Ascending aorta (tissue), 2 donors: ENCODE measurements at regions of chr4 and their contacts with region 1.

Region 1: GRCh38 chr4:3724319-3725231 is 41.6 kb upstream of the ADRA2C start:
- DNase-seq: no peak
- H3K4me3 ChIP-seq: peak overlapping the region in 1 of 2 donors; percentile 26
- H3K27ac ChIP-seq: peak overlapping the region; percentile 74 to 86
- H3K4me1 ChIP-seq: peaks cover 9 to 49% of the 10 kb centered on the region in 2 donors
- H3K27me3 ChIP-seq: no peaks in the 10 kb centered on the region
- CTCF ChIP-seq: no peak

Region 2: DNA sequence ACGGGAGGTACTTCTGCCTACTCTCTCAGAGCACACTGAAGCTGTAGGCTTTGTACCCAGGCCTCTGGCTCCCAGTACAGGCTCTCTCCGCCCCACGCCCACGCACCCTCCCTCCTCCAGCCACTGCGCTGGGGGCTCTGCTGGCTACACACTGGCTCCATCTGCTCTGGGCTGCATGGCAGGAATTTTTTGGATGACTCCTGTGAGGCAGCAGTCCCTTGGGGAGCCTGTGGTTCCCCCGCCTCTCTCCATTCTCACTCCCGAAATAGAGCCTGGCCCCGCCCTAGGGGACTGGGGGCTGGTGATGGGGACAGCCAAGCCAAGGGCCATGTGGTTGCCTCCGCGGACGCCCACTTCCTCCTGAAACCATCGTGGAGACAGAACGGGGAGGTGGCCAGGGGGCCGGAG is 16.5 kb before region 1 on chr4:
- intact Hi-C with region 1: loop called (anchors 1 kb)
- DNase-seq: peak; percentile 61 to 94
- H3K4me3 ChIP-seq: peak overlapping the region; percentile 32 to 38
- H3K27ac ChIP-seq: peak overlapping the region; percentile 68 to 73
- H3K4me1 ChIP-seq: peaks cover 7 to 41% of the 10 kb centered on the region in 2 donors
- H3K27me3 ChIP-seq: no peaks in the 10 kb centered on the region
- CTCF ChIP-seq: no peak

Region 3: GRCh38 chr4:3783406-3784306 is 59.1 kb after region 1 on chr4:
- intact Hi-C with region 1: no loop called
- DNase-seq: no peak
- H3K4me3 ChIP-seq: no peak overlapping the region
- H3K27ac ChIP-seq: no peak overlapping the region
- H3K4me1 ChIP-seq: no peaks in the 10 kb centered on the region
- H3K27me3 ChIP-seq: no peaks in the 10 kb centered on the region
- CTCF ChIP-seq: peak in 2 of 3 experiments; percentile 29 to 45